HEK293 (cell line): ENCODE measurements at regions of chr15 and their contacts with region 1.

Region 1: DNA sequence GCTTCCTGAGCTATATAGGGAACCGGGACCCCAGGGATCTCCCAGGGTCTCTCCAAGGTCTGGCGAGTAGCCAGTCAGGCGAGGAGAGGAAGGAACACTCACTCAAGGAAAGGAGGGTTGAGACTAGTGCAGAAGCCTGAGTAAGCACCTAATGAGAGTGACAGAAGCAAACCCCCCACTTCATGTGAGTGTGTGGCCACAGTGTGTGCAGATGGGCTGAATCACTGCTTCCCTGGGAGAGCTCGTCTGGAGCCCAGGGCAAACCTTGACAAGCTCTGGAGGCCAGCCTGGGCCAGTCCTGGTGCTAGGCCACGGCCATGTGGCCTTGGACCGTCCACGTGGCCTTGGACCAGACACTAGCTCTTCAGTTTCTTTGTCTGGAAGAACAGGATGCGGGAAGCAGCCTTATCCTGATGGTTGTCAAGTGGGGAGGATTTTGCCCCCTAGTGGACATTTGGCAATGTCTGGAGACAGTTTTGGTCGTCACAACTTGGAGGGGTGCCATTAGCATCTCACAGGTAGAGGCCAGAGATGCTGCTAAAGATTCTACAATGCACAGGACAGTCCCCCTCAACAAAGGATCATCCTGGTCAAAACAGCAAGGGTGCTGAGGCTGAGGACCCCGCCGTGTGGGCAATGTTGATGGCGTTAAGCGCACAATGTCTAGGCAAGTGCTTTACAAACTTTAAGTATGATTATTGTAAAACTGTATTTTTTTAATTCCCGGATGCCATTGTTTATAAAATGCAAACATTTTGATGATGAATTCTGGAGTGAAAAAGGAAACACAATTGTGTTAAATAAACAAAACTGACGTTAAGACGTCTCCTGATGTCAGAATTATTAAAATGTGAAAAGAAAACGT is 34.8 kb upstream of the CTSH start:
- H3K4me3 ChIP-seq: no peak overlapping the region
- H3K27ac ChIP-seq: no peak overlapping the region; the same call in 1 of the 2 replicates
- H3K4me1 ChIP-seq: no peaks in the 10 kb centered on the region
- CTCF ChIP-seq: peak; percentile 59; the same call in 1 of the 2 replicates

Region 2: DNA sequence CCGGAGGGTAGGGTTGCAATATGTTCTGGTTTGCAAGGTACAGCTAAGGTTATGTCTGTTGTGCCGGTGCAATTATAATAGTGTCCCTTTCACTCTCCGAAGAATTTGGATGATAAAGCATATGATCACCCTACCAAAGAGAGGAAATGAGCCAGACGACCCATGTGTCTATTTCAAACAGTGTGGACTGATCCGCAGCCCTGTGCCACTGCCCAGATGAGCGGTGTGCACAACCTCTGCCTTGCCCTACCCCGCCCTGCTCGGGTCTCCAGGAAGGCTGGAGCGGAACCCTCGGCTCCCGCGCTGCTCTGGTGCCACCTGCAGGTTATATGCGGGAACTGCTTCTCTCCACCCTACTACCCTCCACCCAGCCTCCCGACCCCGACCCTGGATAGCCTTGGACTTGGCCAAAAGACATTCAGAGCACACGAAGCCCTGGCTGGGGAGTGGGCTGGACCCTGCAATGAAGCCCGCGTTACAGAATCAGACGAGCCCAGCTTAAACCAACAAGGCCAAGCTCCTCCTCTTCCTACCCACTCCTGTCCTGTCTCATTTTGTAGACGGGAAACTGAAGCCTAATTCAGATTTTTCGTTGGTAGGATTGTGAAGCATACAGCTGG is 270.3 kb before region 1 on chr15:
- CTCF ChIA-PET with region 1: no interaction called
- POLR2A ChIA-PET with region 1: no interaction called
- H3K4me3 ChIP-seq: no peak overlapping the region
- H3K27ac ChIP-seq: no peak overlapping the region
- H3K4me1 ChIP-seq: no peaks in the 10 kb centered on the region
- CTCF ChIP-seq: peak; percentile 94

Region 3: DNA sequence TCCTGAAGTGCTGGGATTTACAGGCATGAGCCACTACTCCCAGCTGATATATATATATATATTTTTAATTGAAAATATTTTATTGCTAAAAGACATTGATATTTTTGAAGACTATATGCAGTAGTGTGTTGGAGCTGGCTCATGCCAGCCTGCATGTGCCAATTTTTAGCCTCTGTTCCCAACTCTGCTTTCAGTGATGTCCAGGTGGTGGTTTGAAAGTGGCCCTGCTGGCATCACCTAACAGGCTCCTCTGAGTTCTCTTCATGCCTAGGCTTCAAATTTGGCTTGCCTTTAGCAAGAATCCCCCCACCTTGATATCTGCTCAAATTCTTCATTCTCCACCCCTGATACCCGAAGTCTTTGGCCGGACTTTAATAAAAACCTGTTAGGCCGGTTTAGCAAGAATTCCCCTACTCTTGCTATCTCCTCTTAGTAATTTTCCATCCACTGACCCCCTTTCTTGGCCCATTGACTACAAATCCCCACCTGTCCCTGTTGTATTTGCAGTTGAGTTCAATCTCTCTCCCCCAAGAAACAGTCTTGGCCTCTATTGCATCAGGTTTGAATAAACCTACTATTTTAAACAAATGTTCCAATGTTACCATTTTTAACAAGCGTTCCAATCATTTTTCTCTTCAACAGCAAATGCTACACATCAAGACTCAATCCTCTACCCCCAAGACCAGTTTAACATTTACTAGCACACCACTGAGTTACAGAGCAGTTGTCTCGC is 11.0 kb before region 1 on chr15:
- CTCF ChIA-PET with region 1: interaction called, 36 read pairs
- POLR2A ChIA-PET with region 1: no interaction called
- H3K4me3 ChIP-seq: no peak overlapping the region
- H3K27ac ChIP-seq: no peak overlapping the region
- H3K4me1 ChIP-seq: no peaks in the 10 kb centered on the region
- CTCF ChIP-seq: no peak

Region 4: DNA sequence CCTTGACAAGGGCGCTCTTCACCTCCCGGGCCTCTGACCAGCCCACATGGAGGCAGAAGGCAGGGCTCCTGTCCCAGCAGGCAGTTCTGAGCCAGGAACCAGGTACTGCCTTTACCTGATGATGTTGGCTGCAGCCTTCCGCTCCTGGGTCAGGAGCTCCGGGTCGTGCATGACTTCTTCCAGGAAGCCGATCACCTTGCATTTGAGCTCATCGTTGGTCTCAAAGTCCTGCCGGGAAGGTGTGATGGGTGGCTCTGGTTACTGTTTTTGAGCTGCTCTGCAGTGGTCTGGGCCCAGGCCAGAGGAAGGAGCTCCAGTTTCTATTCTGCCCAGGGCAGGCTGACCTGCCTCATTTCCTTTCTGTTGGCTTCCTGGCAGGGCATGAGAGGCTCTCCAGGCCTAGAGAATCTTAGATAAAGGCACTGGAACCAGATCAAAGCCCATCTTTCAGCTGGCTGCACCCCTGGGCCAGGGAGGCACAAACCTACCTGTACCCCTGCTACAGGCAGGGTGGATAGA is 18.4 kb after region 1 on chr15:
- CTCF ChIA-PET with region 1: interaction called, 17 read pairs
- POLR2A ChIA-PET with region 1: no interaction called
- H3K4me3 ChIP-seq: no peak overlapping the region
- H3K27ac ChIP-seq: no peak overlapping the region
- H3K4me1 ChIP-seq: no peaks in the 10 kb centered on the region
- CTCF ChIP-seq: no peak

Region 5: DNA sequence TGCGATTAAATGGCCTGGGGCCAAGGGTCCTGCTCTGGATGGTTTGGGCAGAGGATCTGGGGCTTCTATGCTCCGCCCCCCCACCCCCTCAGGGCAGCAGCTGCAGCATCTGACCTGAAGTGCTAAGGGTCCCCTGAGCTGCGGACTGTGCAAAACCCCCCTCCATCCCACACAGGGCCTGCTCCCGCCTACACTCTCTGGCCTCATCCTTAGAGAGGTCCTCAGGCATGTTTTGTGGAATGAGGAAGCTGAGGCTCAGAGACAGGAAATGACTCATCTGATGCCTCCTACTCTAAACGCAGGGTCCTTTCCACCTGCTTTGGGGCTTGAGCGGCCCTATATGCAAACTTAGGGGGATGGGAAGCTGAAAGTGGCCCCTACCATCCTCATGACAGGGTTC is 24.6 kb after region 1 on chr15:
- CTCF ChIA-PET with region 1: interaction called, 17 read pairs
- POLR2A ChIA-PET with region 1: no interaction called
- H3K4me3 ChIP-seq: no peak overlapping the region
- H3K27ac ChIP-seq: no peak overlapping the region
- H3K4me1 ChIP-seq: no peaks in the 10 kb centered on the region
- CTCF ChIP-seq: no peak